CD4-positive, alpha-beta memory T cell (primary cell): ENCODE measurements at regions of chr10 and their contacts with region 1.

Region 1: DNA sequence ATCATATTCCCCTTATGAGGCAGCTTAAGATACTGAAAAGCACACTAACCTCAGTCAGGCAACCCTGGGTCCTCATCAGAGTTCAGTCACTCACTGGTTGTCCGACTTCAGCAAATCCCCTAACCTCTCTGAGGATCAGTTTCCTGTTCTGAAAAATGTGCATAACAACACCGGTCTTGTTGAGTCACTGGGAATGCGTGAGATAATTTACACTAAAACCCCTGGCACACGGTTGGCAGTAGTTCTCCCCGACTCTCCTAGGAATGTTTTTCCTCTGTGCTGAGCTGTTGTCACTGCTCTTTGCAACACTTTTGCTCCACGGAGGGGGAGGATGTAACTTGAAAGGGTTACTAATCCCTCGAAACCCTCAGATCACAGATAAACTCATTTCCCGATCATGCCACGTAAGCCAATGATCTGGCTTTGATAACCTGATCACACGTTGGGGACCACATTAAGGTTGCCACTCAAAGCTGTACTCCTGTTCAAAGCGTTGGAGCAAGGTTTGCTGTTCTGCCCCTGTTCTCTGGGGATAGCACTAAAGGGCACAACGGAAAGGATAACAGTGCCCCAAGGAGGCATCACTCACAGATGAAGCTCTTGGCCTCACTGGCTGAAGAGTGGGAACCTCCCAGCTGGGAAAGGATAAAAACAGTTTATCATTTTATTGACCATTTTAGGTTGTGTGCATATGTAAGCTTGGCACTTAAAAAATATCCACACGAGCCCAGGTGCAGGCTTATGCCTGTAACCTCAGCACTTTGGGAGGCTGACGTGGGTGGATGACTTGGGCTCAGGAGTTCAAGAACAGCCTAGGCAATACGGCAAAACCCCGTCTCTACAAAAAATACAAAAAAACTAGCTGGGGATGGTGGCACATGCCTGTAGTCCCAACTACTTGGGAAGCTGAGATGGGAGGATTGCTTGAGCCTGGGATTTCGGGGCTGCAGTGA is 5.0 kb upstream of the RBM17 start:
- DNase-seq: peak; percentile 47 to 72 (median 61)
- H3K4me3 ChIP-seq: peak overlapping the region in 1 of 2 donors; percentile 28
- H3K4me3 Mint-ChIP-seq: peak overlapping the region; percentile 51 to 84 (median 76)
- H3K27ac ChIP-seq: no peak overlapping the region
- H3K27ac Mint-ChIP-seq: peak overlapping the region; percentile 21 to 88 (median 74)
- H3K4me1 ChIP-seq: peaks cover 38% of the 10 kb centered on the region
- H3K4me1 Mint-ChIP-seq: peaks cover 31 to 61% (median 42%) of the 10 kb centered on the region in 4 donors
- H3K27me3 ChIP-seq: no peaks in the 10 kb centered on the region
- H3K27me3 Mint-ChIP-seq: no peaks in the 10 kb centered on the region

Region 2: DNA sequence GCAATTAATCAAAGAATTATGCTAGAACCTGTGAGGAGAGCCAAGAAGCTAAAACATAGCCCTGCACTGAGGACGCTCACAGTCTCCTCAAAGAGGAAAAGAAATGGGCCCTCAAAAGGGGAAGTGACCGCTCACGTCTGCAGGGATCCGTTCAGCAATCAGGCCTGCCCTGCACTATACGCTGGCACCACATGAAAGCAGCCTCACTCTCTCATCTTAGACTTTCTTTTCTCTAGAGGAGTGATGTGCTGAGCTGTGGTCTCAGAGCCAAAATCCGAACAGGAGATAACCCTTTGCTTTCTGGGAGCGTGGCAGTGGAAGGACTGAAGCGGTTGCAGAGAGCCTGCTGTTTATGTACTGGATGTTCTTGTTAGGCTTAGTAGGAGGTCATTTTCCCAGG is 15.4 kb before region 1 on chr10:
- CTCF ChIA-PET with region 1: interaction called, 53 read pairs
- POLR2A ChIA-PET with region 1: interaction called, 23 read pairs
- intact Hi-C with region 1: loop called (anchors 2 kb)
- DNase-seq: peak; percentile 48 to 73 (median 60)
- H3K4me3 ChIP-seq: peak overlapping the region; percentile 12 to 27
- H3K4me3 Mint-ChIP-seq: peak overlapping the region; percentile 69 to 86 (median 82)
- H3K27ac ChIP-seq: no peak overlapping the region
- H3K27ac Mint-ChIP-seq: peak overlapping the region; percentile 36 to 89 (median 82)
- H3K4me1 ChIP-seq: peaks cover 81% of the 10 kb centered on the region
- H3K4me1 Mint-ChIP-seq: peaks cover 58 to 91% (median 70%) of the 10 kb centered on the region in 4 donors
- H3K27me3 ChIP-seq: no peaks in the 10 kb centered on the region
- H3K27me3 Mint-ChIP-seq: no peaks in the 10 kb centered on the region

Region 3: DNA sequence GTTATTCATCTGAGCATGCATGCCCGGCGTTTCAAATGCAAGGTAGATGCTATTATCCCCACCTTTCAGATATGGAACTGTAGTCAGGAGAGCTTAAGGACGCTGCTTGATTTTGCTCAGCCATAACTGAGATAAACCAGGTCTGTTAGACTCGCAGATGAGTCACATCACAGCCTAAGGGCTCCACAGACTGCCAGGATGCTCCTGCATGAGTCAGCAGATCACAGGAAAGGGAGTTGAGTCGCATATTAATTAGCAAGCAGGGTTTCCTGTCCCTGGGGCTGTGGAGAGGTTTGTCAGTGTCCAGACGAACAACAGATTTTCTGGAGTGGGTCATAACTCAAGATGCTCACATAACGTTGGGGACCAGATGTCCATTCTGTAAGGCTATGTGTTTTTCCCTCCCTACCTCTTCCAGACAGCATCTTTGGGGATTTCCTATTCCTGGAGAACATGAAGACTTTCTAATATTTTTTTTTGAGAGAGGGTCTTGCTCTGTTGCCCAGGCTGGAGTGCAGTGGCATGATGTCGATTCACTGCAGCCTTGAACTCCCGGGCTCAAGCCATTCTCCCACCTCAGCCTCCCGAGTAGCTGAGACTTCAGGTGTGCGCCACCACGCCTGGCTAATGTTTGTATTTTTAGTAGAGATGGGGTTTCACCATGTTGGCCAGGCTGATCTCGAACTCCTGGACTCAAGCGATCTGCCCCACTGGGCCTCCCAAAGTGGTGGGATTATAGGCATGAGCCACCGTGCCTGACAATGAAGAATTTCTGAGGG is 155.6 kb after region 1 on chr10:
- CTCF ChIA-PET with region 1: no interaction called
- POLR2A ChIA-PET with region 1: no interaction called
- intact Hi-C with region 1: no loop called
- DNase-seq: peak in 4 of 5 donors; percentile 14 to 84 (median 20)
- H3K4me3 ChIP-seq: no peak overlapping the region
- H3K4me3 Mint-ChIP-seq: peak overlapping the region in 2 of 8 donors; percentile 13 to 32
- H3K27ac ChIP-seq: no peak overlapping the region
- H3K27ac Mint-ChIP-seq: peak overlapping the region; percentile 20 to 78 (median 63)
- H3K4me1 ChIP-seq: peaks cover 12% of the 10 kb centered on the region
- H3K4me1 Mint-ChIP-seq: peaks cover 12 to 22% (median 13%) of the 10 kb centered on the region in 4 donors
- H3K27me3 ChIP-seq: no peaks in the 10 kb centered on the region
- H3K27me3 Mint-ChIP-seq: no peaks in the 10 kb centered on the region